BJ (cell line): ENCODE measurements at regions of chr11 and their contacts with region 1.

Region 1: GRCh38 chr11:47152953-47153950 is 23.4 kb downstream of the ARFGAP2 start:
- DNase-seq: no peak
- H3K4me3 ChIP-seq: no peak overlapping the region
- H3K27me3 ChIP-seq: no peaks in the 10 kb centered on the region
- CTCF ChIP-seq: peak; percentile 99

Region 2: GRCh38 chr11:46868912-46869311 is 284.3 kb before region 1 on chr11:
- CTCF ChIA-PET with region 1: interaction called, 11 read pairs
- POLR2A ChIA-PET with region 1: no interaction called
- DNase-seq: no peak
- H3K4me3 ChIP-seq: no peak overlapping the region
- H3K27me3 ChIP-seq: no peaks in the 10 kb centered on the region
- CTCF ChIP-seq: no peak

Region 3: GRCh38 chr11:46889689-46890475 is 263.4 kb before region 1 on chr11:
- CTCF ChIA-PET with region 1: interaction called, 65 read pairs
- POLR2A ChIA-PET with region 1: no interaction called
- DNase-seq: peak; percentile 9
- H3K4me3 ChIP-seq: no peak overlapping the region
- H3K27me3 ChIP-seq: no peaks in the 10 kb centered on the region
- CTCF ChIP-seq: peak; percentile 84

Region 4: DNA sequence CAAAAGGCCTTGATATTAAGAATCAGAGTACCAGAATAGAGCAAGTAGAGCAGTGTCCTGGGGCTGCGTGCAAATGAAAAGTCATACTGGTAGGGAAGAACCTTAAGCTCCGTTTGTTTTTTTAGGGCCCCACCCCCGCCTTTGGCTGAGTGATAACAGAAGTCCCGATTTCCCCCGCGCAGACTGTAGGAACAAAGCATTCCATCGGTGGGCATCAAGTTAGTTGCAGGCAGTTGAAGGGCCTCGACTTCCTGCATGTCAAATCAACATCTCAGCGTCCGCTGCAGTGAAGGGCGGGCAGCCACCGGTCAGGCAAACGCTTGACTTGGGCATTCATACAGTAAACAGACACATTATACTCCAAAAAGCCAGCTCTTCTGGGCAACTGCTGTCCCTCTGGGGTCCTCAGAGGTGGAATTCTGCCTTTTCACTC is 246.6 kb before region 1 on chr11:
- CTCF ChIA-PET with region 1: interaction called, 15 read pairs
- POLR2A ChIA-PET with region 1: interaction called, 3 read pairs
- DNase-seq: no peak
- H3K4me3 ChIP-seq: no peak overlapping the region
- H3K27me3 ChIP-seq: no peaks in the 10 kb centered on the region
- CTCF ChIP-seq: no peak

Region 5: GRCh38 chr11:47083913-47084312 is 69.3 kb before region 1 on chr11:
- CTCF ChIA-PET with region 1: interaction called, 11 read pairs
- POLR2A ChIA-PET with region 1: no interaction called
- DNase-seq: peak; percentile 86
- H3K4me3 ChIP-seq: no peak overlapping the region
- H3K27me3 ChIP-seq: no peaks in the 10 kb centered on the region
- CTCF ChIP-seq: no peak